Mammary epithelial cell (primary cell): ENCODE measurements at regions of chr1 and their contacts with region 1.

Region 1: GRCh38 chr1:47710329-47711071 is 272.7 kb downstream of the FOXD2 start:
- DNase-seq: peak; percentile 41
- H3K4me3 ChIP-seq: no peak overlapping the region
- H3K27ac ChIP-seq: no peak overlapping the region
- H3K4me1 ChIP-seq: peaks cover 23% of the 10 kb centered on the region
- H3K27me3 ChIP-seq: peaks cover 29% of the 10 kb centered on the region
- CTCF ChIP-seq: peak; percentile 87 to 100

Region 2: GRCh38 chr1:47378147-47378546 is 332.4 kb before region 1 on chr1:
- CTCF ChIA-PET with region 1: no interaction called
- dilution Hi-C with region 1: loop called (anchors 10 kb)
- in situ Hi-C with region 1: no loop called
- intact Hi-C with region 1: no loop called
- DNase-seq: no peak
- H3K4me3 ChIP-seq: no peak overlapping the region
- H3K27ac ChIP-seq: no peak overlapping the region
- H3K4me1 ChIP-seq: no peaks in the 10 kb centered on the region
- H3K27me3 ChIP-seq: no peaks in the 10 kb centered on the region
- CTCF ChIP-seq: no peak

Region 3: GRCh38 chr1:47432071-47433036 is 278.1 kb before region 1 on chr1:
- CTCF ChIA-PET with region 1: interaction called, 12 read pairs
- dilution Hi-C with region 1: no loop called
- in situ Hi-C with region 1: loop called in 1 of 2 experiments (anchors 10 kb)
- intact Hi-C with region 1: loop called (anchors 1 kb)
- DNase-seq: peak; percentile 78
- H3K4me3 ChIP-seq: peak overlapping the region in 2 of 3 experiments; percentile 25 to 36
- H3K27ac ChIP-seq: peak overlapping the region; percentile 56
- H3K4me1 ChIP-seq: peaks cover 52% of the 10 kb centered on the region
- H3K27me3 ChIP-seq: no peaks in the 10 kb centered on the region
- CTCF ChIP-seq: peak; percentile 78 to 92

Region 4: DNA sequence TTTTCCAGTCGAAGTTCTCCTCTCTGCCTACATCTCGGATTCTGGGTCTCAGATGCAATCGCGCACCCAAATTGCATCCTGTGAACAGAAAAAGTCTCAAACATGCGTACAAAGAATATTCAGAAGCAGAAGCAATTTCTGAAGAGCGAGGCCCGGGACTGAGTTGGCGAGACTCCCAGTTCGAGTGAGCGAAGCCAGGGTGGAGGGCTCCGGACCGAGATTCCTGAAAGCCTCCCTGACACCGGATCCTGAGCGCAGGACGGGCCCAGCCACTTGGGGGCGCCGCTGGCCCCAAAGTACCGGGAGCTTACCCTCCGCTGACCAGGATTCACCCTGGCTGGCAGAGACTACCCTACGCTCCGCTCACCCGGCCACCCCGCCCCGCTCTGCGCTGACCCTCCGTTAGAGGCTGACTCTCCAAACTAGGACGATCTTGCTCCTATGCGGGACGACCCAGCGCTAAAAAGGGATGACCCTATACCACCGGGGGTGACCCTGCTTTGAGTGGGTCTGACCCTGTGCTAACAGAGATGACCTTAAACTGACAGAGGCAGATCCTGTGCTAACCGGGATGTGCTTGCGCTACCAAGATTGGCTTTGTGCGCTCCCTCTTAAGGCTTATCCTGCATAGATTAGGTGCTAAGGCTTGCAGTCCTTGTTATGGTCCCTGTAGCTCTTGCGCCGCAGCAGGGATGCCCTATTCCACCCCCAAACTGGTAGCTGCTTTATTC is 260.5 kb before region 1 on chr1:
- CTCF ChIA-PET with region 1: no interaction called
- dilution Hi-C with region 1: loop called (anchors 5 kb)
- in situ Hi-C with region 1: loop called in 1 of 2 experiments (anchors 10 kb)
- intact Hi-C with region 1: no loop called
- DNase-seq: no peak
- H3K4me3 ChIP-seq: no peak overlapping the region
- H3K27ac ChIP-seq: no peak overlapping the region
- H3K4me1 ChIP-seq: no peaks in the 10 kb centered on the region
- H3K27me3 ChIP-seq: peaks cover 24% of the 10 kb centered on the region
- CTCF ChIP-seq: peak; percentile 32 to 64

Region 5: DNA sequence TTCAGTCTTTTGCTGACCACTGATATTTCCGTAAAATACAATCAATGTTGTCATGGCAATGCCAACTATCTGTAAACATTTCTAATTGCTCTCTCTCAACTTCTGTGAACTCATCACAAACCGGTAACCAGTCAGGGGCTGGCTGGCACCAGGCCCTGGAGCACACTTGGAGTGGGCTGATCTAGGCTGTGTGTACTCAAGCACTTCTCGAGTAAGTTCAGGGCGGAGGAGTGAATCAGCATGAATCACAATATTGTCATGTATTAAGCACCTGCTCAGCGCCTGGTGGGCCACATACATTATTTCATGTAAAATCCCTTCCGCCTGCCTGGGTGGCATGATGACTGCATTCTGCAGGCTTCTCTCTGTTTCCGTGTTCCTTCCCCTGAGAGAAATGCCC is 60.3 kb before region 1 on chr1:
- CTCF ChIA-PET with region 1: no interaction called
- dilution Hi-C with region 1: no loop called
- in situ Hi-C with region 1: no loop called
- intact Hi-C with region 1: no loop called
- DNase-seq: peak; percentile 97
- H3K4me3 ChIP-seq: no peak overlapping the region
- H3K27ac ChIP-seq: peak overlapping the region; percentile 80
- H3K4me1 ChIP-seq: peaks cover 25% of the 10 kb centered on the region
- H3K27me3 ChIP-seq: no peaks in the 10 kb centered on the region
- CTCF ChIP-seq: peak in 1 of 2 donors; percentile 17

Region 6: DNA sequence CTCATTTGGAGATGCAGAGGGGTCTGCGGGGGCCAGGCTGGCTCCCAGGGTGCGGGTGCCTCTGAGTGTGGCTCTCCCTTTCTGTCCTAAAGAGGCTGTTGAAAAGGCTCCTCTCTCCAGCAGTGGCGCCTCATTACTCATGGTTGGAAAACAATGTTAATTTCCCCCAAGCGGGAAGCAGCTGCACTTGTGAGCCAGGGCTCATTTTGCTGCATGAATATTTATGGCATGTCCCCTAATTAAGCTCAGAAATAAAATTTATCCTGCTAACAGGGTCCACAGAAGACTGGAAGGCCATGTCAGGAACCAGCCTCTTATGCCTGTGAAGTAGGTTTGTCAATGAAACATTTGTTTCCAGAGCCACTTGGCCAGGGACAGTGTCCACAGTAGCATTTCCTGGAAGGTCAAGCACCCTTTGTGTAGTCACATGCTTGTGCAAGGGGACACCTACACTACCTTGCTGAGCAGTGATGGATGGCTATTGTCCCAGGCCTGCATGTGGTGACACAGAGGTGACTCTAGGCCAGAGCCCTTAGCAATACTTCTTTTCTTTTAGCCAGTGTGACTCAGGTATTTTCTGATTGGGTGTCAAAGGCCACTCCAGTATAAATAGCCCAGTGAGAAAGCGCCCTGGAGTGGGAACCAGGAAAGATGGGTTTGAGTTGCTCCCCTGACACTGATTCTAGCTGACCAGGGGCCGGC is 13.6 kb before region 1 on chr1:
- CTCF ChIA-PET with region 1: no interaction called
- dilution Hi-C with region 1: no loop called
- in situ Hi-C with region 1: no loop called
- intact Hi-C with region 1: no loop called
- DNase-seq: no peak
- H3K4me3 ChIP-seq: no peak overlapping the region
- H3K27ac ChIP-seq: no peak overlapping the region
- H3K4me1 ChIP-seq: no peaks in the 10 kb centered on the region
- H3K27me3 ChIP-seq: no peaks in the 10 kb centered on the region
- CTCF ChIP-seq: no peak

Region 7: DNA sequence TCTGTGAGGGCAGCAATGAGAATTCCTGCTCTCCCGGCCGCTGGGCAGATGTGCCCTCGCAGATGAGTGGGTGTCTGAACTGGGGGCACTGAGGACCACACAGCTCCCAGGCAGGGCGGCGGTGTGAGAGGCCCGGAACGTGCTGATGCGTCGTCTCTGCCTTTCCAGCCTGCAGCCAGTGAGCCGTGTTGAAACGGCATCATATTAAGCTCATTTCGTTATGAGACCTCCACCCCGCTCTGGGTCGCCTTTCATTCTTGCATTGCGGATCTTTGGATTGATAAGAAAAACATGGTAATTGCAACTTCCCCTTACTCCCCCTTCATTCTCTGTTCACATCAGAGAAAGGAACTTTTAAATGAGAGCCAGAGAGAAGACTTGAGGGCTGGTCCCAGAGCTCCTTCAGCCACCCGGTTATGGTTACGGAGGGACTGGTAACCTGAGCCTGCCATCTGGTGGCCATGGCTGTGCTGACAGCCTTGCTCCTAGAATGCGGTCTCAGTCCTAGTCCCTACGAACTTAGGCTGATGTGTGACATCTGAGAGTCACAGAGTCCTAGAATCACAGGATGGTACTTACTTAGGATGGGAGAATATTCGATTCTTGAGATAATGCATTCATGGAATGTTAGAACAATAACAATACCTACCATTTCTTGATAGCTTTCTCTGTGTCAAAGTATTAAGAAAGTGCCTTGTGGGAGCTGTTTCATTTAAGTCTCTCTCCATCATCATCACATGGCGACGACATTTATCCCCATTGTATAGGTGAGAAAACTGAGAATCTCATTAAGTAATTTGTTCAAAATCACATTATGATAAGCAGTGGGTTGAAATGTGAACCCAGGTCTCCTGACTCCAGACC is 15.7 kb after region 1 on chr1:
- CTCF ChIA-PET with region 1: interaction called, 6 read pairs
- dilution Hi-C with region 1: no loop called
- in situ Hi-C with region 1: no loop called
- intact Hi-C with region 1: loop called (anchors 1 kb)
- DNase-seq: peak; percentile 58
- H3K4me3 ChIP-seq: peak overlapping the region in 1 of 3 experiments; percentile 8
- H3K27ac ChIP-seq: no peak overlapping the region
- H3K4me1 ChIP-seq: peaks cover 20% of the 10 kb centered on the region
- H3K27me3 ChIP-seq: no peaks in the 10 kb centered on the region
- CTCF ChIP-seq: peak; percentile 94

Region 8: GRCh38 chr1:47881505-47882442 is 171.3 kb after region 1 on chr1:
- CTCF ChIA-PET with region 1: no interaction called
- dilution Hi-C with region 1: no loop called
- in situ Hi-C with region 1: no loop called
- intact Hi-C with region 1: no loop called
- DNase-seq: peak; percentile 45
- H3K4me3 ChIP-seq: no peak overlapping the region
- H3K27ac ChIP-seq: no peak overlapping the region
- H3K4me1 ChIP-seq: no peaks in the 10 kb centered on the region
- H3K27me3 ChIP-seq: no peaks in the 10 kb centered on the region
- CTCF ChIP-seq: no peak